Heart right ventricle (tissue), 16 donors: ENCODE measurements at regions of chr9 and their contacts with region 1.

Region 1: GRCh38 chr9:36328798-36329411 is 70.7 kb upstream of the GNE start:
- DNase-seq: peak in 1 of 2 donors; percentile 65
- ATAC-seq: peak in 6 of 8 donors; percentile 57 to 71 (median 68)
- H3K4me3 ChIP-seq: no peak overlapping the region
- H3K27ac ChIP-seq: no peak overlapping the region
- H3K4me1 ChIP-seq: peaks cover 0 to 12% (median 0%) of the 10 kb centered on the region in 9 donors
- H3K27me3 ChIP-seq: no peaks in the 10 kb centered on the region
- CTCF ChIP-seq: peak; percentile 65 to 90 (median 82)

Region 2: GRCh38 chr9:36092509-36093215 is 236.2 kb before region 1 on chr9:
- intact Hi-C with region 1: loop called in 1 of 10 experiments (anchors 5 kb)
- DNase-seq: no peak
- ATAC-seq: peak in 3 of 8 donors; percentile 43 to 72 (median 65)
- H3K4me3 ChIP-seq: no peak overlapping the region
- H3K27ac ChIP-seq: peak overlapping the region in 3 of 10 donors; percentile 12 to 74 (median 64)
- H3K4me1 ChIP-seq: peaks cover 0 to 26% (median 12%) of the 10 kb centered on the region in 9 donors
- H3K27me3 ChIP-seq: no peaks in the 10 kb centered on the region
- CTCF ChIP-seq: no peak

Region 3: DNA sequence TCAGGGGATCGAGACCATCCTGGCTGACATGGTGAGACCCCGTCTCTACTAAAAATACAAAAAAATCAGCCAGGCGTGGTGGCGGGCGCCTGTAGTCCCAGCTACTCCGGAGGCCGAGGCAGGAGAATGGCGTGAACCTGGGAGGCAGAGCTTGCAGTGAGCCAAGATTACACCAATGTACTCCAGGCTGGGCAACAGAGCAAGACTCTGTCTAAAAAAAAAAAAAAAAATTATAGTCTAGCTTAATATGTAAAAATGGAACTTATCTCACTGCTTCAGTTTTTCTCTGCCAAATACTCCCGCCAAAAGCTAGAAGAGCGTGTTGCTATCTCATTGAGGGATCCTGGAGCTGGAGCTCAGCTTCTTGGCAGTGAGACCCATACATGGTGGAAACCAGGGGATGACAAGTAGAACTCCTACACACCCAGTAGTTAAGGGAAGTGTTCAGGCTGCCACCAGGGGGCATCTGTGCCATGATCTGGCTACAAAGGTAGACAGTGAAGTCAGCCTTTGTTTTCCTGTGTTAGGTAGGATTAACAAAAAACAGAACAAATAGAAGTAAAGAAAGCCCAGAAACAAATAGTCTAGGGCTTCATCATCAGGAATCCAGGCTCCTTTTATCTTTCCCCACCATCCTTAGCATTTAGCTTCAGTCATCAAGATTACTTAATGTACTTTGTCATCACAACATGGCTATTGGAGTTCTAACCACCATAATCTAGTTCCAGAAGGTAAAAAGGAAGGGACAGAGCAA is 226.0 kb before region 1 on chr9:
- intact Hi-C with region 1: loop called in 3 of 10 experiments (anchors 10 kb)
- DNase-seq: peak; percentile 76 to 81
- ATAC-seq: peak; percentile 87 to 97 (median 91)
- H3K4me3 ChIP-seq: no peak overlapping the region
- H3K27ac ChIP-seq: no peak overlapping the region
- H3K4me1 ChIP-seq: peaks cover 0 to 8% (median 0%) of the 10 kb centered on the region in 9 donors
- H3K27me3 ChIP-seq: no peaks in the 10 kb centered on the region
- CTCF ChIP-seq: peak; percentile 61 to 89 (median 80)

Region 4: DNA sequence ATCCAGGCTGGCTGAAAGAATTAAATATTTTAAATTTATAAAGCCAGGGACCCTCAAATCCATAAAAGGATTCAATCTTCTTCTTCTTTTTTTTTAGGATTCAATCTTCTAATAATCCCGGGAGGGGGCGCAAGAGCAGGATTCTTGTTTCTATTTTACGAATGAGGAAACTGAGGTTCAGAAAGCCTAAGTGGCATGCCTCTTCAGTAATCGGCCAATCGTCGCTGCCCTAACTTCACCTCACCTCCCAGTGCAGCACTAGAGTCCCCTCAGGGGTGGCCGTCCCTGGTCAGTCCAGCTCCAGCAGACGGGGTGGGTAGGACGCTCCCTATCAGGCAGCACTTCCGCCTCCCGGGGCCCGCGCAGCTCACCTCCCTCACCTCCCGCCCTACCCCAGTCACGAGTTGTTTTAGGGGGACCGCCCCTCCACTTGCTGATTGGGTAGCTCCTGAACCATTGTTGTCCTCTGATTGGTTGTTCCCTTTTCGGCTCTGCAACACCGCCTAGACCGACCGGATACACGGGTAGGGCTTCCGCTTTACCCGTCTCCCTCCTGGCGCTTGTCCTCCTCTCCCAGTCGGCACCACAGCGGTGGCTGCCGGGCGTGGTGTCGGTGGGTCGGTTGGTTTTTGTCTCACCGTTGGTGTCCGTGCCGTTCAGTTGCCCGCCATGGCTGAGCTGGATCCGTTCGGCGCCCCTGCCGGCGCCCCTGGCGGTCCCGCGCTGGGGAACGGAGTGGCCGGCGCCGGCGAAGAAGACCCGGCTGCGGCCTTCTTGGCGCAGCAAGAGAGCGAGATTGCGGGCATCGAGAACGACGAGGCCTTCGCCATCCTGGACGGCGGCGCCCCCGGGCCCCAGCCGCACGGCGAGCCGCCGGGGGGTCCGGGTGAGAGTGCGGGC is 138.3 kb before region 1 on chr9 and contains the start of gene CLTA:
- intact Hi-C with region 1: loop called in 6 of 10 experiments (anchors 2 to 10 kb)
- DNase-seq: peak; percentile 92 to 98
- ATAC-seq: peak; percentile 99 to 100 (median 99)
- H3K4me3 ChIP-seq: peak within 1 kb of the TSS; percentile 64 to 97 (median 85)
- H3K27ac ChIP-seq: peak within 1 kb of the TSS; percentile 48 to 95 (median 88)
- H3K4me1 ChIP-seq: peaks cover 12 to 45% (median 38%) of the 10 kb centered on the region in 9 donors
- H3K27me3 ChIP-seq: no peaks in the 10 kb centered on the region
- CTCF ChIP-seq: peak in 8 of 9 donors; percentile 40 to 72 (median 58)
- total RNA-seq, gene CLTA: 44.5 to 80.4 (median 48.8) TPM

Region 5: GRCh38 chr9:36250079-36250478 is 78.8 kb before region 1 on chr9:
- intact Hi-C with region 1: loop called in 8 of 10 experiments (anchors 1 to 10 kb)
- DNase-seq: no peak
- ATAC-seq: no peak
- H3K4me3 ChIP-seq: no peak overlapping the region
- H3K27ac ChIP-seq: no peak overlapping the region
- H3K4me1 ChIP-seq: peaks cover 0 to 21% (median 7%) of the 10 kb centered on the region in 9 donors
- H3K27me3 ChIP-seq: no peaks in the 10 kb centered on the region
- CTCF ChIP-seq: no peak

Region 6: DNA sequence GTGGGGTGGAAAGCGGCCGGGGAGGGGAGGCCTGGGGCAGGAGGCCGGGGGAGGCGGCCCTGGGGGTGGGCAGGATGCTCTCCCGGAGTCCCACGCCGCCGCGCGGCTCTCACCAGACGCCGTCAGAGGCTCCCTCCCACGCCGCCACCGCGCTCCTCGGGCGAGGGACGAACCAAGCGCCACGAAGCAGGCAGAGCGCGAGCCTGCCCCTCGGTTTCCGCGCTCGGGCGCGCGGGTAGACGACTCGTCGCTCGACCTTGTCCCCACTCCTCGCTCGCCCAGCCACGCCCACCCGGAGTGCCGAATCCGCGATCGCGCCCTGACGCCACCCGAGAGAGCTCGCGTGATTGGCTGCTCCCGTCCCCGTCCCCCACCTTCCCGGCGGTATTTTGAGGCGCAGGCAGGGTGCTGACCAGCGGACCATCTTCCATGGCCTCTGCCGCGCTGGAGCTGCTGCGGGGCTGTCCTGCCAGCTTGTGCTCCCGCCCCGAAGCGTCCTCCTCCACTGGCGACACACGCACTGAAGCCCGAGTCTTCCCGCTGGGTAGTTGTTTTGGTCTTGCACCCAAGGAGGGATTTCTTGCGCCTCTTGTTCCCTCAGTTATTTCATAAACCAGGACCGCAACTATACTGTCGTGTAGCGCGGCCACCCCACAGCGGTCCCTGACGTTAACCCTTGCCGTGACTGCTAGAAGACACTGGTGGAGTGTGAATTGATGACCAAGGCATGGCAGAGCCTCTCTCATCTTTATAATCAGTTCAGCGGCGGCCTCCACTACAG is 70.5 kb before region 1 on chr9 and contains the start of gene GNE:
- intact Hi-C with region 1: loop called in 6 of 10 experiments (anchors 5 to 10 kb)
- DNase-seq: peak; percentile 99
- ATAC-seq: peak; percentile 98 to 99 (median 99)
- H3K4me3 ChIP-seq: peak within 1 kb of the TSS; percentile 66 to 99 (median 90)
- H3K27ac ChIP-seq: peak within 1 kb of the TSS; percentile 87 to 99 (median 98)
- H3K4me1 ChIP-seq: peaks cover 0 to 18% (median 11%) of the 10 kb centered on the region in 9 donors
- H3K27me3 ChIP-seq: no peaks in the 10 kb centered on the region
- CTCF ChIP-seq: peak in 1 of 9 donors; percentile 5
- total RNA-seq, gene GNE: 10.1 to 14.9 (median 12.5) TPM

Region 7: DNA sequence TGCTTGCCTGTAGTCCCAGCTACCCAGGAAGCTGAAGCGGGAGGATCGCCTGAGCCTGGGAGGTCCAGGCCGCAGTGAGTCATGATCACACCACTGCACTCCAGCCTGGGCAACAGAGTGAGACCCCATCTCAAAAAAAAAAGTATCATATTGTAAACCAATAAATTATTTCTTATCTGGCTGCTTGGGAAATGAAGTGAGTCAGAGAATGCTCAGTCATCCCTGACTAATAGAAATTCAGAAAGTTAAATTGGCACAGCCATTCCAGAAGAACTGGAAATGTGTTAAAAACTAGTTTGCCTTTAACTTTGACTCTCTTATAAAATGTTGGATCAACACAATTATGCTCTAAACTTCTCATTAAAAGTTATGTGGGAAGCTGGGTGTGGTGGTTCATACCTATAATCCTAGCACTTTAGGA is 60.9 kb before region 1 on chr9:
- intact Hi-C with region 1: loop called in 2 of 10 experiments (anchors 5 to 10 kb)
- DNase-seq: no peak
- ATAC-seq: no peak
- H3K4me3 ChIP-seq: no peak overlapping the region
- H3K27ac ChIP-seq: no peak overlapping the region
- H3K4me1 ChIP-seq: no peaks in the 10 kb centered on the region
- H3K27me3 ChIP-seq: no peaks in the 10 kb centered on the region
- CTCF ChIP-seq: no peak